PC-9 (cell line): ENCODE measurements at regions of chr4 and their contacts with region 1.

Region 1: GRCh38 chr4:89129080-89129640 is 17.8 kb downstream of the TIGD2 start:
- DNase-seq: no peak
- H3K4me3 ChIP-seq: no peak overlapping the region
- H3K27ac ChIP-seq: no peak overlapping the region
- H3K4me1 ChIP-seq: peaks cover 4% of the 10 kb centered on the region; the same call in 1 of the 2 replicates
- H3K27me3 ChIP-seq: no peaks in the 10 kb centered on the region
- CTCF ChIP-seq: no peak

Region 2: GRCh38 chr4:88841635-88842034 is 287.5 kb before region 1 on chr4:
- CTCF ChIA-PET with region 1: interaction called, 12 read pairs
- POLR2A ChIA-PET with region 1: no interaction called
- intact Hi-C with region 1: no loop called
- DNase-seq: no peak
- H3K4me3 ChIP-seq: no peak overlapping the region
- H3K27ac ChIP-seq: no peak overlapping the region
- H3K4me1 ChIP-seq: no peaks in the 10 kb centered on the region
- H3K27me3 ChIP-seq: no peaks in the 10 kb centered on the region
- CTCF ChIP-seq: no peak